Dorsolateral prefrontal cortex (tissue), 120 donors: ENCODE measurements at regions of chr17 and their contacts with region 1.

Region 1: GRCh38 chr17:11997147-11997846 is at the start of gene ZNF18:
- DNase-seq: peak; percentile 89 to 98 (median 96)
- H3K4me3 ChIP-seq: peak within 1 kb of the TSS; percentile 59 to 99 (median 90)
- H3K27ac ChIP-seq: peak within 1 kb of the TSS; percentile 59 to 97 (median 90)
- H3K27me3 ChIP-seq: no peaks in the 10 kb centered on the region
- CTCF ChIP-seq: peak in 33 of 56 donors; percentile 6 to 61 (median 37)
- total RNA-seq, gene ZNF18: 5.9 to 18.7 (median 10.1) TPM

Region 2: DNA sequence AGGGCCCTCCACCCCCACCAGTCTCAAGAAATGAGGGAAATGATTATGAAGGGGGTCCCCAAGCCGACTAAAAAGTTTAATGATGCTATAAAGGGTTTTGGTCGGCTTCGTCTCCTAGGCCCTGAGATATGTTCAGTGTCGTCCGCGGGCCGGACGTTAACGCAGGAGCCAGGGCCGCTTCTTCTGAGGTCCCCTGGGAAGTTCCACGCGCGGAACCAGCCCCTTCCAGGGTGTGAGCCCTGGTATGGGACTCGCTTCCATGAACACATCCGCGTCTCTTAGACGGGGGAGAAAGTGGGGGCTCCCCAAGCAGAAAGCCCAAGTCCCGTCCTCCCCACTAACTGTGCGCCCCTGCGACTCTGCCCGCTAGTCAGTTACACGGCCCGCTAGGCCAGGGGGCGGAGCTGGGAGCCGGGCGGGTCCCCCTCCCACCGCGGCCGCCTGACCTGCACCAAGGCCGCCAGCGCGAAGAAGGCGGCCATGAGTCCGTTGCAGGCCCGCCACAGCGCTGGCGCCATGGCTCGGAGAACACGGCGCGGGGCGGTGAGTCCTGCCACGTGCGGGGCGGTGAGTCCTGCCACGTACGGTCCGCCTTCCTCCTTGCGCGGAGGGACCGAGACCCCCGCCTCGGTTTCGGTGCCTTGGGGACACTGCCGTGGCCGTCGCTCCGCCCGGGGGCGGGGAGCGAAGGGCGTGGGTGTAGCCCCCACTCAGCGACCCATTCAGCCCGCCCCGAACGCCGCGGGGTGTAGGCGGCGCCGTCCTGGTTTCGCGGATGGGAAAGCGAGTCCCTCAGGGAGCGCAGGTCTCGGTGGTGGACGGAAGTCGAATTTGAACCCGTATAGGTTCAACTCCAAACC is 1267.7 kb before region 1 on chr17 and contains the start of gene TMEM220:
- intact Hi-C with region 1: loop called in 1 of 2 experiments (anchors 10 kb)
- DNase-seq: peak in 9 of 10 donors; percentile 16 to 80 (median 53)
- H3K4me3 ChIP-seq: peak within 1 kb of the TSS; percentile 49 to 88 (median 76)
- H3K27ac ChIP-seq: peak within 1 kb of the TSS in 55 of 59 donors; percentile 21 to 95 (median 83)
- H3K27me3 ChIP-seq: no peaks in the 10 kb centered on the region
- CTCF ChIP-seq: peak in 10 of 56 donors; percentile 5 to 36 (median 14)
- total RNA-seq, gene TMEM220: 0.47 to 11.5 (median 3.9) TPM

Region 3: GRCh38 chr17:11144358-11145233 is 852.7 kb before region 1 on chr17:
- intact Hi-C with region 1: loop called in 1 of 2 experiments (anchors 5 kb)
- DNase-seq: peak in 5 of 10 donors; percentile 24 to 48 (median 39)
- H3K4me3 ChIP-seq: no peak overlapping the region
- H3K27ac ChIP-seq: no peak overlapping the region
- H3K27me3 ChIP-seq: no peaks in the 10 kb centered on the region
- CTCF ChIP-seq: peak; percentile 55 to 89 (median 78)

Region 4: DNA sequence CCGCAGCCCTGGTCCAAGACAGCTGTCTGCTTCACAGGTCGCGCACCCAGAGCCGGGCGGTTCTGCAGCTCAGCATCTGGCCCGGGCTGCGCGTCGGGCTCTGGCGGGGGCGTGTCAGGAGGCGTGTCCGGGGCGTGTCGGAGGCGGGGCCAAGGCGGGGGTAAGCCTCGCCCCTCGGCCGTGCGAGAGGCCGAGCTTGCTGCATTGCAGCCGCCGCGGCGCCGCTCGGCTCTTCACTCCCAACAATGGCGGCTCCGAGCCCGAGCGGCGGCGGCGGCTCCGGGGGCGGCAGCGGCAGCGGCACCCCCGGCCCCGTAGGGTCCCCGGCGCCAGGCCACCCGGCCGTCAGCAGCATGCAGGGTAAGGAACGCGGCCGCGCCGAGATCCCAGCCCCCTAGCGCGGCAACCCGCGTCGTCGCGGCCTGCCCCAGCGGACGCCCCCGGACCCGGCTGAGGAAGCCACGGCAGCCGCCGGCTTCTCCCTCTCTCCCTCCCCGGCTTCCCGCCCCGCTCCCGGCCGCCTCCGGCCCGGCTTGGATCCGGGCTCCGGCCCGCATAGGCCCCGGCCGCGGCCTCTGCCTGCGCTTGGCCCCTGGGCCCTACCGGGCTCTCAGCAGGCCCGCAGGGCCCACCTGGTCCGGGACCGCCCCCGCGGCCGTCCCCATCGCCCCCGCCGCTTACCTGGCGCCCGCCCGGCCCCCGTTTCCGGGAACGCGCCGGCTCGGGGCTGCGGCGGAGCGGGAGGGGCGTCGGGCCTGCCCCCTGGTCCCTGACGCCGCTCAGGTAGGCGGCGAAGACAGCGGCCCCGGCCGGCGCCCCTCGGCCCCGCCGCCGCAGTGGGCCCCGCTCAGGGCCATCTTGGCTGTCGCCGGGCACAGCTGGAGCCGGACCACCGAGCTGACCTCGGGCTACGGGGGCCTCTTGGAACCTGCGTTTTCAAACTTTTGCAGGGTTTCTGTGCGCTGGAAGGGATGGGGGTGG is 23.6 kb after region 1 on chr17 and contains the start of gene MAP2K4:
- intact Hi-C with region 1: loop called (anchors 1 to 2 kb)
- DNase-seq: peak; percentile 86 to 97 (median 92)
- H3K4me3 ChIP-seq: peak within 1 kb of the TSS; percentile 54 to 98 (median 81)
- H3K27ac ChIP-seq: peak within 1 kb of the TSS in 53 of 59 donors; percentile 5 to 95 (median 77)
- H3K27me3 ChIP-seq: no peaks in the 10 kb centered on the region
- CTCF ChIP-seq: peak in 15 of 56 donors; percentile 9 to 42 (median 21)
- total RNA-seq, gene MAP2K4: 73.7 to 171 (median 137) TPM

Region 5: DNA sequence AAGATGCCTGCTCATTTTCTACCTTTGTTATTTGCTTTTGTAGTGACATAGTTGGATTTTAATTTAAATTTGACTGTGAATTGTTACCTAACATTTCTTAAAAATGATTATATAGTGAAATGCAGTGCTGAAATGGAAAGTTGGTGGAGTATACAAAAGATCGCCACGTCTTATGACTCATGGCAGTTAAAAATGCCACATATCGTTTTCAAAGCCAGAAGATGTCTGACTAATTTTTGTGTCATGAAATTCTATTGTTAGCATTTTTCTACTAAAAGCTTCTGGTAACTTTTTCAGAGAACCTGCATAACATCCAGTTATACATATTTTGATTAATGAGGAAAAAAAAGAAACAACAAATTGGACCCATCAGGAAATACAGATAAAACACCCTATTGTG is 44.0 kb after region 1 on chr17:
- intact Hi-C with region 1: no loop called
- DNase-seq: no peak
- H3K4me3 ChIP-seq: no peak overlapping the region
- H3K27ac ChIP-seq: peak overlapping the region in 9 of 59 donors; percentile 2 to 60 (median 38)
- H3K27me3 ChIP-seq: no peaks in the 10 kb centered on the region
- CTCF ChIP-seq: no peak

Region 6: GRCh38 chr17:12068946-12069345 is 71.6 kb after region 1 on chr17:
- intact Hi-C with region 1: loop called in 1 of 2 experiments (anchors 5 kb)
- DNase-seq: no peak
- H3K4me3 ChIP-seq: peak overlapping the region in 30 of 59 donors; percentile 5 to 64 (median 52)
- H3K27ac ChIP-seq: peak overlapping the region; percentile 17 to 99 (median 88)
- H3K27me3 ChIP-seq: no peaks in the 10 kb centered on the region
- CTCF ChIP-seq: no peak

Region 7: GRCh38 chr17:13017659-13018459 is 1020.6 kb after region 1 on chr17 and contains the start of gene ELAC2:
- intact Hi-C with region 1: loop called in 1 of 2 experiments (anchors 5 kb)
- DNase-seq: peak; percentile 95 to 99 (median 98)
- H3K4me3 ChIP-seq: peak within 1 kb of the TSS; percentile 54 to 100 (median 94)
- H3K27ac ChIP-seq: peak within 1 kb of the TSS in 55 of 59 donors; percentile 4 to 92 (median 71)
- H3K27me3 ChIP-seq: no peaks in the 10 kb centered on the region
- CTCF ChIP-seq: peak in 45 of 56 donors; percentile 2 to 71 (median 43)
- total RNA-seq, gene ELAC2: 33.5 to 76.4 (median 53.1) TPM